Ovary (tissue), 10 donors: ENCODE measurements at regions of chr20 and their contacts with region 1.

Region 1: DNA sequence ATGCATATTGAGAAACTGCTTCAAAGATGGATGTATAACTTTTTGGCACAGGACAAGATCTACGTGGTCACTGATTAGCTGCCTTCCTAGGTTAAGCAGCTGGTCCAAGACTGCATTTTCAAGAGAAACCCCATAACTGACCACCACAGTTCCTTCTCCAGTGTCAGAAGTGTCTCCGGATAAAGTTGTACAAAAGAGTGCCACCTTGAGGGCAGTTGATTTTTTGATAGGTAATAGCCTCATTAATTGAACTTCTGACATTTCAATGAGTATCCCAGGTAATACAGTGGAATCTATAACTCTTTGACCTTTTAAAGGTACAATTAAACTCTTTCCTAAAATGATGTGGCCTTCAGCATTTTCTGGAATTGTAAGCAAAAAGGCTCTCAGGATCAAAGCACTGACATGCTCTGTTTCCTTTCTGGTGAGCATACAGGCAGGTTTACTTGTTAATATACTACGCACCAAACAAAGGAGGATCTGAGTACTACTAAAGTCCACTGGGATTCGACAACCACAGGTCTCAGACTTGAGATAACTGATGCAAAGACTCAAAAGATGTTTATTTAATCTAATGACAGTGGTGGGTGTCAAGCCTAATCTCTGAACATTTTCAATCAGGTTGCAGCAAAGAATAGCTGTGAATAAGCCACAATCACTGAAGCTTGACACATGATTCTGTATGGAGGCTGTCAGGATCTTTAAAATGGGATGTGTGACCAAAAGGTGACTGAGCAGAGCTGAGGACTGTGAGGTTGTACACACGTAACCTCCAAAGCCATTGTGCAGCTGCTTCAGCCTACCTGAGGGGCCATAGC is 21.2 kb downstream of the MKKS start:
- DNase-seq: no peak
- H3K4me3 ChIP-seq: no peak overlapping the region
- H3K27ac ChIP-seq: no peak overlapping the region
- H3K4me1 ChIP-seq: no peaks in the 10 kb centered on the region
- H3K27me3 ChIP-seq: no peaks in the 10 kb centered on the region
- CTCF ChIP-seq: no peak
- EP300 ChIP-seq: no peak
- POLR2A ChIP-seq: no peak

Region 2: GRCh38 chr20:10225439-10226060 is 187.2 kb before region 1 on chr20:
- intact Hi-C with region 1: loop called in 1 of 4 experiments (anchors 10 kb)
- DNase-seq: no peak
- H3K4me3 ChIP-seq: no peak overlapping the region
- H3K27ac ChIP-seq: no peak overlapping the region
- H3K4me1 ChIP-seq: no peaks in the 10 kb centered on the region
- H3K27me3 ChIP-seq: no peaks in the 10 kb centered on the region
- CTCF ChIP-seq: no peak
- EP300 ChIP-seq: no peak
- POLR2A ChIP-seq: no peak